Naive thymus-derived CD4-positive, alpha-beta T cell (primary cell): ENCODE measurements at regions of chr10 and their contacts with region 1.

Region 1: GRCh38 chr10:35508647-35509046 is 96.5 kb upstream of the GJD4 start:
- DNase-seq: no peak
- ATAC-seq: no peak
- H3K4me3 ChIP-seq: no peak overlapping the region
- H3K4me3 Mint-ChIP-seq: no peak overlapping the region
- H3K27ac ChIP-seq: no peak overlapping the region
- H3K27ac Mint-ChIP-seq: no peak overlapping the region
- H3K4me1 ChIP-seq: no peaks in the 10 kb centered on the region
- H3K4me1 Mint-ChIP-seq: peaks cover 3 to 84% (median 59%) of the 10 kb centered on the region in 7 donors
- H3K27me3 ChIP-seq: no peaks in the 10 kb centered on the region
- H3K27me3 Mint-ChIP-seq: no peaks in the 10 kb centered on the region

Region 2: GRCh38 chr10:34933676-34934075 is 575.0 kb before region 1 on chr10:
- CTCF ChIA-PET with region 1: no interaction called
- POLR2A ChIA-PET with region 1: no interaction called
- intact Hi-C with region 1: no loop called
- DNase-seq: no peak
- ATAC-seq: no peak
- H3K4me3 ChIP-seq: no peak overlapping the region
- H3K4me3 Mint-ChIP-seq: no peak overlapping the region
- H3K27ac ChIP-seq: no peak overlapping the region
- H3K27ac Mint-ChIP-seq: no peak overlapping the region
- H3K4me1 ChIP-seq: no peaks in the 10 kb centered on the region
- H3K4me1 Mint-ChIP-seq: no peaks in the 10 kb centered on the region
- H3K27me3 ChIP-seq: no peaks in the 10 kb centered on the region
- H3K27me3 Mint-ChIP-seq: peaks cover 0 to 6% (median 0%) of the 10 kb centered on the region in 5 donors

Region 3: GRCh38 chr10:35495521-35496119 is 13.0 kb before region 1 on chr10:
- CTCF ChIA-PET with region 1: no interaction called
- POLR2A ChIA-PET with region 1: no interaction called
- intact Hi-C with region 1: loop called in 1 of 2 experiments (anchors 2 kb)
- DNase-seq: no peak
- ATAC-seq: peak; percentile 46
- H3K4me3 ChIP-seq: no peak overlapping the region
- H3K4me3 Mint-ChIP-seq: peak overlapping the region in 5 of 10 donors; percentile 28 to 61 (median 43)
- H3K27ac ChIP-seq: peak overlapping the region; percentile 12
- H3K27ac Mint-ChIP-seq: peak overlapping the region in 7 of 9 donors; percentile 0 to 68 (median 38)
- H3K4me1 ChIP-seq: peaks cover 0 to 7% of the 10 kb centered on the region in 2 donors
- H3K4me1 Mint-ChIP-seq: peaks cover 21 to 83% (median 73%) of the 10 kb centered on the region in 7 donors
- H3K27me3 ChIP-seq: no peaks in the 10 kb centered on the region
- H3K27me3 Mint-ChIP-seq: no peaks in the 10 kb centered on the region